HCT116 (cell line): ENCODE measurements at regions of chr1 and their contacts with region 1.

Region 1: DNA sequence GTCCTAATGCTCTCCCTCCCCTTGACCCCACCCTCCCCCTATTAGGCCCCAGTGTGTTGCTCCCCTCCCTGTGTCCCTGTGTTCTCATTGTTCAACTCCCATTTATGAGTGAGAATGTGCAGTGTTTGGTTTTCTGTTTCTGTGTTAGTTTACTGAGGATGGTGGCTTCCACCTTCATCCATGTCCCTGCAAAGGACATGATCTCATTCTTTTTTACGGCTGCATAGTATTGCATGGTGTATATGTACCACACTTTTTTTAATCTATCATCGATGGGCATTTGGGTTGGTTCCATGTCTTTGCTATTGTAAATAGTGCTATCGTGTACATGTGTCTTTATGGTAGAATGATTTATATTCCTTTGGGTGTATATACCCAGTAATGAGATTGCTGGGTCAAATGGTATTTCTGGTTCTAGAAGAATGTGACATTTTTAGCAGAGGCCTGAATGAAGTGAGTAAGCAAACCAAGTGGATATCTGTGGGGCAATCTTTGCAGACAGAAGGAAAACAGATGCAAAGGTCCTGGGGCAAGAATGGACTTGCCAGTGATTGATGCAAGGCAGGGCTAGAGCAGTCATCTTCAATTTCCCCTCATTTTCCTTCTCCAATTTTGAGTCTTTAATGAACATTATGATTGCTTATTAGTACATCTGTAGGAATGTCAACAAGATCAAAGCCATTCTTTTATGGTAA is 50.2 kb downstream of the UBE4B start:
- DNase-seq: no peak
- ATAC-seq: no peak
- H3K4me3 ChIP-seq: no peak overlapping the region
- H3K27ac ChIP-seq: no peak overlapping the region
- H3K4me1 ChIP-seq: peaks cover 0 to 4% of the 10 kb centered on the region in 2 experiments; a peak in 1 of 4 replicates
- H3K27me3 ChIP-seq: no peaks in the 10 kb centered on the region
- CTCF ChIP-seq: no peak
- POLR2A ChIP-seq: no peak
- RAD21 ChIP-seq: no peak

Region 2: DNA sequence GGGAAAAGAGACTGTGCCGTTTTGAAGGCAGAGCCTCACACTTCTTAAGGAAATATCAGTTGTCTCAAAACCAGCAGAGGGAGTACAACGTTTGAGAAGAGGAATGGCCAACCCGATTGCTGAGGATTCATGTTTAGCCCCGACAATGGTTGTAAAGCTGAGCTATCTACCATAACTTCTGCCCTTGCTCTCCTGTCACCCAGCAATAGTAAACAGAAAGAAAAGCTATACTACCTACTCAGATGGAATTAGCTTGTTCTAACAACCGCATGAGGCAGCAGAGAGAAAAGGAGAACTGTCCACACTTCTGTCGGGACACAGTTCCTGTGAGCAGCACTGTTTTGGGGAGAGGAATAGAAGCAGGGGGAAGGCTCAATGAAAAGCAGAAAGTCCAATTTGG is 1673.8 kb before region 1 on chr1:
- CTCF ChIA-PET with region 1: no interaction called
- POLR2A ChIA-PET with region 1: no interaction called
- RAD21 ChIA-PET with region 1: no interaction called
- intact Hi-C with region 1: no loop called
- DNase-seq: no peak
- ATAC-seq: no peak
- H3K4me3 ChIP-seq: no peak overlapping the region
- H3K27ac ChIP-seq: no peak overlapping the region; the same call in none of the 2 replicates
- H3K4me1 ChIP-seq: peaks cover 6 to 21% of the 10 kb centered on the region in 2 experiments; a peak in 3 of 4 replicates
- H3K27me3 ChIP-seq: no peaks in the 10 kb centered on the region
- CTCF ChIP-seq: peak in 2 of 3 experiments; percentile 16 to 20; a peak in 3 of 6 replicates
- POLR2A ChIP-seq: no peak
- RAD21 ChIP-seq: peak; percentile 43

Region 3: GRCh38 chr1:10143961-10144485 is 61.1 kb after region 1 on chr1:
- CTCF ChIA-PET with region 1: no interaction called
- POLR2A ChIA-PET with region 1: no interaction called
- RAD21 ChIA-PET with region 1: no interaction called
- intact Hi-C with region 1: loop called (anchors 5 kb)
- DNase-seq: no peak
- ATAC-seq: no peak
- H3K4me3 ChIP-seq: no peak overlapping the region
- H3K27ac ChIP-seq: no peak overlapping the region
- H3K4me1 ChIP-seq: no peaks in the 10 kb centered on the region
- H3K27me3 ChIP-seq: no peaks in the 10 kb centered on the region
- CTCF ChIP-seq: no peak
- POLR2A ChIP-seq: no peak
- RAD21 ChIP-seq: no peak